ENCODE measurements at regions of chr4 and their contacts with region 1.

Region 1: DNA sequence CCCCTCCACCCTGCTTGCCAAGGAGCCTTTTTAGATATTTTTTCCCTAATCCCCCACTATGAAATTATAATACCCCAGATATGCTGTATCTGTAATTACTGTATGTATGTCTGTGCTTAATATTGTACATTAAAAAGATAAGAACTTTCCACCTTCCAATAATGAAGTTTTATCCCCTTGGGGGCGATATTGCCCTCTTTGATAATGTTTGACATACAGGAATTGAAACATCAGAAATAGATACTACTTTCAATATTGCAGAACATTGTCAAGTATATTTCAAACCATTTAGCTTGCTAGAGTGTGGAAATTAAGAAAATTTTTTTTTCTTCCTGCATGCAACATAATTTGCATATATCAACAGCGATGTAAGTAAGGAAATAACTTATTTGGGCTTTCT is 58.9 kb downstream of the NAF1 start:
- DNase-seq: peak in 2 of 9 donors; percentile 4 to 14
- ATAC-seq: no peak
- H3K4me3 ChIP-seq: no peak overlapping the region
- H3K4me3 Mint-ChIP-seq: no peak overlapping the region
- H3K27ac ChIP-seq: no peak overlapping the region
- H3K27ac Mint-ChIP-seq: no peak overlapping the region
- H3K4me1 ChIP-seq: no peaks in the 10 kb centered on the region
- H3K4me1 Mint-ChIP-seq: peaks cover 6 to 20% (median 14%) of the 10 kb centered on the region in 7 donors
- H3K27me3 ChIP-seq: no peaks in the 10 kb centered on the region
- H3K27me3 Mint-ChIP-seq: no peaks in the 10 kb centered on the region

Region 2: DNA sequence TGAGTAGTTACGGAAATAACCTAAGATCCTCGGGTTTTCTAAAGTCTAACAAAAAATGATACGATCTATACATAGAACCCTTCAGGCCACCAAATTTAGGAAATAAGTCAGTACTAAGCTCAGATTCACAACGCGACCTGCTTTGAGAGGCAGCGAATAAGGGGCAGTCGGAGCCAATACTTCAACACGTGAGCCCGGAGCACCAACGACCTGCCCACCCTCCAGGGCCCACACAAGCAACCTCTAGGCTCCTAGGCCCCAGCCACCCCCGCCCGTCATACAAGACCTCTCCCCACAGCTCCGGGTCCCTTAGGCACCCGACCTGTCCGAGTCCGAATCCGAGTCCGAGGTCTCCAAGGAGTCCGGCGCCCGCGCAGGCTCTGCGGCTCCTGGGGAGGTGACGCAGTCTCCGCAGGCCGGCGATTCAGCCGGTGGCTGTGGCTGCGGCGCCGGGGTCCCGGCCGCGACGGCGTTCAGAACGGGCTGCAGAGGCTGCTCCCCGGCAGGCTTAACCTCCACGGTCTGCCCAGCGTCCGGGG is 58.4 kb after region 1 on chr4:
- CTCF ChIA-PET with region 1: no interaction called
- POLR2A ChIA-PET with region 1: no interaction called
- intact Hi-C with region 1: loop called in 1 of 2 experiments (anchors 1 kb)
- DNase-seq: peak; percentile 42 to 70 (median 63)
- ATAC-seq: peak; percentile 60
- H3K4me3 ChIP-seq: peak overlapping the region; percentile 69
- H3K4me3 Mint-ChIP-seq: peak overlapping the region; percentile 88 to 98 (median 92)
- H3K27ac ChIP-seq: peak overlapping the region; percentile 98
- H3K27ac Mint-ChIP-seq: peak overlapping the region; percentile 97 to 100 (median 99)
- H3K4me1 ChIP-seq: peaks cover 5 to 19% of the 10 kb centered on the region in 2 donors
- H3K4me1 Mint-ChIP-seq: peaks cover 28 to 67% (median 54%) of the 10 kb centered on the region in 7 donors
- H3K27me3 ChIP-seq: no peaks in the 10 kb centered on the region
- H3K27me3 Mint-ChIP-seq: no peaks in the 10 kb centered on the region

Region 3: DNA sequence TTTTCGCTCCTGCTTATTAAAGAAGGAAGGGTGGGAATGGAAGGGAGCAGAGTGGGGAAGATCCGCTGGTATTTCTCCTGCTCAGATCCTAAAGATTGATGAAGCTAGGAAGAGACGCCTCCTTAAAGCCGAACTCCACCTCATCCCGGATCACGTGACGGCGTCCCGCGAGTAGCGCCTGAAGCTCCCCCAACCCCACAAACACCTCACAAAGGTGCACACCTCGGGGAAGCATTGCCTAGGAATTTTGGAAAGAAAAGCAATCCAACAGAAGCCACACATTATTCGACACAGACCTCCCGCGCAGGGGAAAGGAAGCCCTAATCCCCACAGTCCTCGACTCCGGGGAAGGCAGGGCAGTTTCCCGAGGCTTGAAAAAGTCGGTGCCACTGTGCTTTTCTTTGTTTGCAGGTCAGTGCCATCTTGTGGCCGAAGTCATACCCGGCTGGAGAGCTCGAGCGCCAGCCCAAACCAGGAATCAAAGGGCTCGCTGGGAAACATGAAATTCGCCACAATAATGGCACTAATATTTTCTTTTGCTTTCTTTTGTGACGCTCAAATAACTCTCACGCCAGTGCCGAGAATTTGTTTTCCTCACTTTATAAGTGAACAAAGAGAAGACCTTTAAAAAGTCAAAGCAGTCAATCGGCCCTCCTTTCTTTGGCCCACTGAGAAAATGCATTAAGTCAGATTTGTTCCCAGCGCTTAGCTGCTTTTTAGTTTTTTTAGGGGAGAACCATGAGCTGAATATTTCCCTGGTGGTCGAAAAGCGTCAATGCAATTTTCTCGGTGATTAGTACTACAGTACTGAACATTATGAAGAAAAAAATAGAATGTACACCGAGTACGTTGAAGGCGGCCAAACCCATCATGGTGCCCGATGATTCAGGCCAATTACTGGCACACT is 225.0 kb after region 1 on chr4 and contains the start of gene NPY1R:
- CTCF ChIA-PET with region 1: no interaction called
- POLR2A ChIA-PET with region 1: no interaction called
- intact Hi-C with region 1: loop called (anchors 1 to 5 kb)
- DNase-seq: peak in 4 of 9 donors; percentile 5 to 27 (median 11)
- ATAC-seq: no peak
- H3K4me3 ChIP-seq: peak within 1 kb of the TSS; percentile 30
- H3K4me3 Mint-ChIP-seq: peak within 1 kb of the TSS; percentile 34 to 76 (median 66)
- H3K27ac ChIP-seq: no peak within 1 kb of the TSS
- H3K27ac Mint-ChIP-seq: no peak within 1 kb of the TSS
- H3K4me1 ChIP-seq: peaks cover 5 to 6% of the 10 kb centered on the region in 2 donors
- H3K4me1 Mint-ChIP-seq: peaks cover 5 to 18% (median 16%) of the 10 kb centered on the region in 7 donors
- H3K27me3 ChIP-seq: peaks cover 0 to 5% of the 10 kb centered on the region in 2 donors
- H3K27me3 Mint-ChIP-seq: peaks cover 56 to 70% (median 68%) of the 10 kb centered on the region in 5 donors
- total RNA-seq, gene NPY1R: not detected

Region 4: DNA sequence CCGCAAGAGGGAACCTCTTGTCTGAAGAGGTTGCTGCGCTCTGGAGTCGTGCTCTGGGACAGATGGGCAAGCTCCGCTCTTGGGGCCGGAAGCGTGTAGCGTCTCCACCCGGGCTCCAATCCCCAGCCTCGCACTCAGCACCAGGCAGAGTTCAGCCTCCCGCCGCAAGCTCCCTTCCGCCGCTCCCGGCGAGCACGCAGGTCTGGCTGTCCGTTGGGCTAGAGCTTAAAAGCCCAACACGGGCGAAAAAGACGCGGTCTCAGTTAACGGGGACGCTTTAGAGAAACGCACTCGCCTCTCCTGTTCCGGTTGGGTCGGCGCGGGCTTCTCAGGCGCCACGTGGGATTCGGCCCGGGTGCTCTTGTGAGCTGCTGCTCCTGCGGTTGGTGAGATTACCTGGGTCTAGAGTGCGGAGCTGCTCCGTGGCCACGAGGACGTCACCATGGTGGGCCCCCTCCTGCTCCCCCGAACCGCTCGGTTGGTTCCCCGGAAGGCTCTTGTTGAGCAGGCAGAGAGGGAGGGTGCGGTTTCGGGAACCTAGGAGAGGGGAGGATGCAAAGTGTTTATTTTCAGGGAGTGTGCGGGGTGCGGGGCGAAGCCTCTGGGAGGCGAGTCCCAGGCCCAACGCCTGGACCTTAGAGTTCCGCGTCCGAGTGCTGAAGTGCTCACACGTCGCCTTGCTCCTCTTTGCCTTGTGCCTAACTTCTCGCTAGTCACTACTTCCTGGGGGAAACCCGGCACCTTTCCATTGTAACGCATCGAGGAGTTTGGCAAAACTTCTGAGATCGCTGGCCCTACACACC is 386.8 kb after region 1 on chr4 and contains the start of gene TMA16:
- CTCF ChIA-PET with region 1: no interaction called
- POLR2A ChIA-PET with region 1: no interaction called
- intact Hi-C with region 1: loop called in 1 of 2 experiments (anchors 5 kb)
- DNase-seq: peak; percentile 56 to 87 (median 76)
- ATAC-seq: peak; percentile 89
- H3K4me3 ChIP-seq: peak within 1 kb of the TSS; percentile 94
- H3K4me3 Mint-ChIP-seq: peak within 1 kb of the TSS; percentile 92 to 100 (median 98)
- H3K27ac ChIP-seq: peak within 1 kb of the TSS; percentile 83
- H3K27ac Mint-ChIP-seq: peak within 1 kb of the TSS; percentile 78 to 99 (median 96)
- H3K4me1 ChIP-seq: peaks cover 7% of the 10 kb centered on the region in 2 donors
- H3K4me1 Mint-ChIP-seq: peaks cover 20 to 44% (median 36%) of the 10 kb centered on the region in 7 donors
- H3K27me3 ChIP-seq: no peaks in the 10 kb centered on the region
- H3K27me3 Mint-ChIP-seq: peaks cover 0 to 12% (median 5%) of the 10 kb centered on the region in 5 donors
- total RNA-seq, gene TMA16: 10.5 to 38.7 (median 20.7) TPM